ENCODE measurements at regions of chr2 and their contacts with region 1.

Region 1: DNA sequence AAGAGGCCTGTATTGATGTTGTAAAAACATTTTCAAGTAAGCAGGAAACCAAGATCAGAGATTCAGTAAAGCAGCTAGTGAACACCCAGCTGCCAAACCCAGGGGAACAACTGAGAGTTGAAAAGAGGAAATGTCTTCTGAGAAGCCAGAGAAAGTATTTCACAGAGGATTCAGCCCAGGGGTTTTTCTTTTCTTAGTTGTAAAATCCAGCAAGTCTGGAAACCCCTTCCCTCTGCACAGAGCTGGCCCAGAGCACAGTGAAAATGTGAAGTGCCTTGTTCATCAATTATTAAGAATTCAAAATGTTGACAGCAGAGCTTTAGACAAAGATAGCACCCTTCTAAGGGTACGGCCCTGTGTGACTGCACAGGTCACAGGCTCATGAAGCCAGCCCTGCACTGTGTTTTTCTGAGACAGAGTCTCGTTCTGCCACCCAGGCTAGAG is 28.4 kb downstream of the AFF3 start:
- DNase-seq: peak in 6 of 9 donors; percentile 10 to 46 (median 40)
- ATAC-seq: peak; percentile 47
- H3K4me3 ChIP-seq: no peak overlapping the region
- H3K4me3 Mint-ChIP-seq: peak overlapping the region; percentile 6 to 71 (median 49)
- H3K27ac ChIP-seq: peak overlapping the region; percentile 47
- H3K27ac Mint-ChIP-seq: peak overlapping the region; percentile 61 to 95 (median 87)
- H3K4me1 ChIP-seq: peaks cover 0 to 18% of the 10 kb centered on the region in 2 donors
- H3K4me1 Mint-ChIP-seq: peaks cover 7 to 46% (median 38%) of the 10 kb centered on the region in 7 donors
- H3K27me3 ChIP-seq: no peaks in the 10 kb centered on the region
- H3K27me3 Mint-ChIP-seq: peaks cover 0 to 7% (median 0%) of the 10 kb centered on the region in 5 donors

Region 2: GRCh38 chr2:100242891-100243619 is 129.0 kb after region 1 on chr2:
- CTCF ChIA-PET with region 1: no interaction called
- POLR2A ChIA-PET with region 1: no interaction called
- intact Hi-C with region 1: loop called in 1 of 2 experiments (anchors 10 kb)
- DNase-seq: peak in 6 of 9 donors; percentile 17 to 48 (median 43)
- ATAC-seq: peak; percentile 56
- H3K4me3 ChIP-seq: no peak overlapping the region
- H3K4me3 Mint-ChIP-seq: no peak overlapping the region
- H3K27ac ChIP-seq: no peak overlapping the region
- H3K27ac Mint-ChIP-seq: no peak overlapping the region
- H3K4me1 ChIP-seq: no peaks in the 10 kb centered on the region
- H3K4me1 Mint-ChIP-seq: no peaks in the 10 kb centered on the region
- H3K27me3 ChIP-seq: no peaks in the 10 kb centered on the region
- H3K27me3 Mint-ChIP-seq: peaks cover 0 to 9% (median 4%) of the 10 kb centered on the region in 5 donors